PC-3 (cell line): ENCODE measurements at regions of chr5 and their contacts with region 1.

Region 1: DNA sequence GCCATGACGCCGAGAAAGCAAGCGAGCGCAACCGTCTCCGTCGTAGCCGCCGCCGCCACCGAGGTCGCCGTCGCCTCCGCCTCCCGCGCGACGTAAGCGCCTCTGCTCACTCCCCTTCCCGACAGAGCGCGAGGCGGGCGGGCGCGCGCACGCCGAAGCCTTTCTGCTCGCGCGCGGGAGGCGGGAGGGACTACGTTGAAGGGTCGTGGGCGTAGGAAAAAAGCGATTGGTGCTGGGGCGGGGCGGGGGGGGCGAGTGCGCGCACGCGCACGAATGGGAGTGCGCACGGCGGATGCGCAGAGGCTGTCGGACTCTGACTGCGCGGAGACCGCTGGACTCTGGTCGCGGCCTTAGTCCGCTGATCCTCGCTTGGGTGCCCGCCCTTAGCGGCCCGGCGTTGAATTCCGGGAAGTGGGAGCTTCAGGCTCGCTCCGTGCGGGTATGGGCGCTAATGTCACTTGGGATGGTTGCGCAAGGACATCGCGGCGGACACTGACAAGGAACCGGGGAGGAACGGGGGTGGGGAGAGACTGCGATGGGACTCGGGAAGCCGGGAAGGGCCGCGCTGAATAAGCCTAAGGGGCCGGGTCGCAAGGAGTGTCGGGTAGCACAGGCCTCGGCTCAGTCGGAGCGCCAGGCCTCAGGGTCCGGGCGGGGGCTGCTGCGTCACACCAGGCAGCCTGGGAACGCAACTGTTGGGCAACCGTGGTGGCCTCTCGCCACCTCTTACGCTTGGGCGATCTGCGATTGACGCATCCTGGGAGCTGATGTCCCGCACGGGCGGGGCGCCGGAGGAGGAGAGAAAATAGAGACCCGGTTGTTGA is at the start of gene CHD1:
- DNase-seq: peak; percentile 99
- ATAC-seq: peak; percentile 67
- H3K4me3 ChIP-seq: peak within 1 kb of the TSS; percentile 98
- H3K27ac ChIP-seq: peak within 1 kb of the TSS; percentile 99
- H3K4me1 ChIP-seq: peaks cover 21% of the 10 kb centered on the region
- H3K27me3 ChIP-seq: no peaks in the 10 kb centered on the region
- CTCF ChIP-seq: no peak
- total RNA-seq, gene CHD1: 45.9 and 52.3 TPM in 2 replicates

Region 2: DNA sequence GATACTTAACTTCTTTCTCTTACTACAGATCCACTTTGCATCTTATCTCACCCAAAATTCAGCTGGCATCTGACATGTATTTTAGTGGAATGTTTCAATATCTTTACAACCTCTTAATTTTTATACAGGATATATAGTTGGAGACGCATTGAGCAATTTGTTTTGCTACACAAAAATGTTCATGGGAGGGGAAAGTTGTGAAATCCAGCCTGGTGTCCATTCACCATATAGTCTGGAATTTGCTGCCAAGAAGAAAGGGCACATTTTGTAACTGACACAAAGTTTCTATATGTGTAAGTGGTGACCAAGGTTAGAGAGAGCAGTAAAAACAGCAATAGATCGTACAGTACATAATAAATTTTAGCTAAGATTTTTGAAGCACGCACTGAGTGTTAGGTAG is 13.8 kb after region 1 on chr5:
- CTCF ChIA-PET with region 1: no interaction called
- POLR2A ChIA-PET with region 1: no interaction called
- intact Hi-C with region 1: loop called (anchors 1 kb)
- DNase-seq: no peak
- ATAC-seq: no peak
- H3K4me3 ChIP-seq: no peak overlapping the region
- H3K27ac ChIP-seq: no peak overlapping the region
- H3K4me1 ChIP-seq: peaks cover 16% of the 10 kb centered on the region; the same call in 1 of the 2 replicates
- H3K27me3 ChIP-seq: no peaks in the 10 kb centered on the region
- CTCF ChIP-seq: no peak

Region 3: DNA sequence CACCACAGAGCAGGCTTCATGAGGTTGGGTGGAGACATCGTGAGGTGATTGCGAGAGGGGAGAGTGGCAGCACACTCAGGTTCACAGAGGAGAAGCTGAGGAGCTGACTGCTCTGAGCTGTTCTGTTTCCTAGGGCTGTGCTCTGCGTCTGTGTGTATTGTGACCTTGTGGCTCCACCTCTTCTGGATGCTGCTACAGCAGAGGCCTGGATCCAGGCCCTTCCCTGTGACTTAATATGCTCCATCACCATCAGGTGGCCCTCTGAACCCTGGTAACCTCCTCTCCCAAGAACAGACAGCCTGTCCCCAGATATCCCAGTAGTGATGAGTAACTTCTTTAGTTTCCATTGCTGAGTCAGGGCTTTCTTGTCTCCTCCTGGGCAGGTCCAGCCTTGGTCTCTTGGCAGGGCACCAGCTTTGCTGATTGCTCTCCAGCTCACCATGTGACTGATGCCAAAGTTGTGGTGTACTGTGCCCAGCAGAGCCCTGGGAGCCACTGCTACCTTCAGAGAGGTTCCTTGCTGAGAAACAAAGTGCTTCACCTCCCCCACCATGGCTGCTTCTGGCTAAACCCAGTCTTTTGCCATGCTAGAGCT is 212.5 kb after region 1 on chr5:
- CTCF ChIA-PET with region 1: no interaction called
- POLR2A ChIA-PET with region 1: no interaction called
- intact Hi-C with region 1: no loop called
- DNase-seq: peak; percentile 25
- ATAC-seq: no peak
- H3K4me3 ChIP-seq: no peak overlapping the region
- H3K27ac ChIP-seq: no peak overlapping the region
- H3K4me1 ChIP-seq: no peaks in the 10 kb centered on the region
- H3K27me3 ChIP-seq: peaks cover 11% of the 10 kb centered on the region; the same call in 1 of the 2 replicates
- CTCF ChIP-seq: no peak